CD4-positive, alpha-beta T cell (primary cell): ENCODE measurements at regions of chr15 and their contacts with region 1.

Region 1: GRCh38 chr15:69160141-69160993 is at the start of gene GLCE:
- DNase-seq: peak; percentile 82 to 97 (median 92)
- ATAC-seq: peak; percentile 94
- H3K4me3 ChIP-seq: peak within 1 kb of the TSS; percentile 85
- H3K4me3 Mint-ChIP-seq: peak within 1 kb of the TSS; percentile 99
- H3K27ac ChIP-seq: peak within 1 kb of the TSS; percentile 18 to 60
- H3K27ac Mint-ChIP-seq: peak within 1 kb of the TSS; percentile 81
- H3K4me1 ChIP-seq: peaks cover 17% of the 10 kb centered on the region
- H3K4me1 Mint-ChIP-seq: peaks cover 17% of the 10 kb centered on the region
- H3K27me3 ChIP-seq: no peaks in the 10 kb centered on the region
- H3K27me3 Mint-ChIP-seq: no peaks in the 10 kb centered on the region
- CTCF ChIP-seq: no peak
- total RNA-seq, gene GLCE: 3.2 TPM

Region 2: DNA sequence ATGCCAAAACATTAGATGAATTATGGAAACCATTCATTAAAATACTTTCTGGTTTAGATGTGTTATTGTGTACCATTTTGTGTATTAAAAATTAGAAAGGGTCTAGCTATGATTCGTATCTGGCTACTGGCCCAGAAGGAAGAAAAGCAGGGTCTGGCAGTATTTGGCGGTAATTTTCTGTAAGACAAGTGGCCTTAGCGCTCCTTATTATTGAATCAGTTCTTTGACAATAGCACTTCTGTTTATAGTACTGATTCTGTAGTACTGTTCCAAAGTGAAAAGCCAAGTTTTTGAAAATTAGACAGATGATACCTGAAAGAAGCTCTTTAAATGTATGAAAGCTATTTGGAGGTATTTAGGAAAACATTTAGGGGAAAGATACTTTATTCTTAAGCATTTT is 10.2 kb after region 1 on chr15:
- CTCF ChIA-PET with region 1: no interaction called
- POLR2A ChIA-PET with region 1: interaction called, 11 read pairs
- intact Hi-C with region 1: no loop called
- DNase-seq: no peak
- ATAC-seq: no peak
- H3K4me3 ChIP-seq: no peak overlapping the region
- H3K4me3 Mint-ChIP-seq: no peak overlapping the region
- H3K27ac ChIP-seq: no peak overlapping the region
- H3K27ac Mint-ChIP-seq: no peak overlapping the region
- H3K4me1 ChIP-seq: no peaks in the 10 kb centered on the region
- H3K4me1 Mint-ChIP-seq: no peaks in the 10 kb centered on the region
- H3K27me3 ChIP-seq: no peaks in the 10 kb centered on the region
- H3K27me3 Mint-ChIP-seq: no peaks in the 10 kb centered on the region
- CTCF ChIP-seq: no peak

Region 3: GRCh38 chr15:69200832-69201745 is 40.7 kb after region 1 on chr15:
- CTCF ChIA-PET with region 1: no interaction called
- POLR2A ChIA-PET with region 1: no interaction called
- intact Hi-C with region 1: no loop called
- DNase-seq: no peak
- ATAC-seq: no peak
- H3K4me3 ChIP-seq: no peak overlapping the region
- H3K4me3 Mint-ChIP-seq: no peak overlapping the region
- H3K27ac ChIP-seq: no peak overlapping the region
- H3K27ac Mint-ChIP-seq: no peak overlapping the region
- H3K4me1 ChIP-seq: no peaks in the 10 kb centered on the region
- H3K4me1 Mint-ChIP-seq: no peaks in the 10 kb centered on the region
- H3K27me3 ChIP-seq: no peaks in the 10 kb centered on the region
- H3K27me3 Mint-ChIP-seq: no peaks in the 10 kb centered on the region
- CTCF ChIP-seq: no peak